ENCODE measurements at regions of chr2 and their contacts with region 1.

Region 1: DNA sequence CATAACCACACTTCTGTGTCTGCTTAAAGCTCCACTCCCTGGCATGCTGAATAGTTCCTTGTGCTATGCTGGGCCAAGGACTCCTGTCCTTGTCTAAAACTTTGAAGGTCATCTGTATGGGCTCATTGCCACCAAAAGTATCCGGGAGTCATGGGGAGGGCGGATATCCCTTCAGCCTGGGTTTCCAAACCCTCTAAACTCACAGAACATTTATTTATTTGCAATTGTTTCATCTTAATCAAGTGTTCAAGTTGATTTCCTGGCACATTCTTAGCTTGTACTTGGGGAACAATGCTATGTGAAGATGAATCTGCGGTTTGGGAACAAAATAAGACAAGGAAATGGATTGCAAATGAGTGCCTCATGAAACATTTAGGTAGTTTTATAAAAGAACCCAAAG is 1.8 kb downstream of the NOSTRIN start:
- DNase-seq: no peak
- H3K4me3 Mint-ChIP-seq: peak overlapping the region; percentile 68
- H3K27ac Mint-ChIP-seq: peak overlapping the region; percentile 65
- H3K4me1 Mint-ChIP-seq: peaks cover 36% of the 10 kb centered on the region
- H3K27me3 Mint-ChIP-seq: no peaks in the 10 kb centered on the region
- CTCF ChIP-seq: no peak

Region 2: DNA sequence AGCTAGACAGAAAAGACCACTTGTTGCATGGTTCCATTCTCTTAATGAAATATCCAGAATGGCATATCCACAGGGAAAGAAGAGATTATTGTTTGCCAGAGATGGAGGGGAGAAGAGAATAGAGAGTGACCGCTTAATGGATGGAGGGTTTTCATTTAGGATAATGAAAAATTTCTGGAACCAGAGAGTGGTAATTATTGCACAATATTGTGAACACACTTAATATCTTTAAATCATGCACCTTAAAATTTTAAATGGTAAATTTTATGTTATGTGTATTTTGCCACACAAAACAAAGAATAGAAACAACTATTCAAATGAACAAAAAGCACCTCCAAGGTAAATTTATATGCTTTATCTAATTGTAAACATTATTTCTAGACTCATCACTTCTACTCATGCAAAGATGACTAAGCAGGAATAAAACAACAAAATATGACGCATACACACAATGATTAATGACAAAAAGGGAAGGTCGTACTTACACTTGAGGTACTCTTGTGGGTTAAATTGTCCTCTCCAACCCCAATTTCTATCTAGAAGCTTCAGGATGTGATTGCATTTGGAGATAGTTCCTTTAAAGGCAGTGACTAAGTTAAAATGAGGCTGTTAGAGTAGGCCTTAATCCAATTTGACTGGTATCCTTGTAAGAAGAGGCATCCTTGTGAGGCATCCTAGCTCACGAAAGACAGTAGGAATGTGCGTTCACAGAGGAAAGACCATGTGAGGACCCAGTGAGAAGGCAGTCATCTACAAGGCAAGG is 246.4 kb after region 1 on chr2:
- CTCF ChIA-PET with region 1: no interaction called
- intact Hi-C with region 1: loop called (anchors 1 kb)
- DNase-seq: no peak
- H3K4me3 Mint-ChIP-seq: no peak overlapping the region
- H3K27ac Mint-ChIP-seq: no peak overlapping the region
- H3K4me1 Mint-ChIP-seq: peaks cover 24% of the 10 kb centered on the region
- H3K27me3 Mint-ChIP-seq: no peaks in the 10 kb centered on the region
- CTCF ChIP-seq: no peak